ENCODE measurements at regions of chr13 and their contacts with region 1.

Region 1: GRCh38 chr13:24323036-24323738 is 13.8 kb downstream of the C1QTNF9 start:
- DNase-seq: no peak
- ATAC-seq: no peak
- H3K4me3 ChIP-seq: no peak overlapping the region
- H3K27ac ChIP-seq: no peak overlapping the region
- H3K4me1 ChIP-seq: peaks cover 0 to 5% (median 0%) of the 10 kb centered on the region in 9 donors
- H3K27me3 ChIP-seq: peaks cover 0 to 32% (median 9%) of the 10 kb centered on the region in 7 donors
- CTCF ChIP-seq: no peak

Region 2: DNA sequence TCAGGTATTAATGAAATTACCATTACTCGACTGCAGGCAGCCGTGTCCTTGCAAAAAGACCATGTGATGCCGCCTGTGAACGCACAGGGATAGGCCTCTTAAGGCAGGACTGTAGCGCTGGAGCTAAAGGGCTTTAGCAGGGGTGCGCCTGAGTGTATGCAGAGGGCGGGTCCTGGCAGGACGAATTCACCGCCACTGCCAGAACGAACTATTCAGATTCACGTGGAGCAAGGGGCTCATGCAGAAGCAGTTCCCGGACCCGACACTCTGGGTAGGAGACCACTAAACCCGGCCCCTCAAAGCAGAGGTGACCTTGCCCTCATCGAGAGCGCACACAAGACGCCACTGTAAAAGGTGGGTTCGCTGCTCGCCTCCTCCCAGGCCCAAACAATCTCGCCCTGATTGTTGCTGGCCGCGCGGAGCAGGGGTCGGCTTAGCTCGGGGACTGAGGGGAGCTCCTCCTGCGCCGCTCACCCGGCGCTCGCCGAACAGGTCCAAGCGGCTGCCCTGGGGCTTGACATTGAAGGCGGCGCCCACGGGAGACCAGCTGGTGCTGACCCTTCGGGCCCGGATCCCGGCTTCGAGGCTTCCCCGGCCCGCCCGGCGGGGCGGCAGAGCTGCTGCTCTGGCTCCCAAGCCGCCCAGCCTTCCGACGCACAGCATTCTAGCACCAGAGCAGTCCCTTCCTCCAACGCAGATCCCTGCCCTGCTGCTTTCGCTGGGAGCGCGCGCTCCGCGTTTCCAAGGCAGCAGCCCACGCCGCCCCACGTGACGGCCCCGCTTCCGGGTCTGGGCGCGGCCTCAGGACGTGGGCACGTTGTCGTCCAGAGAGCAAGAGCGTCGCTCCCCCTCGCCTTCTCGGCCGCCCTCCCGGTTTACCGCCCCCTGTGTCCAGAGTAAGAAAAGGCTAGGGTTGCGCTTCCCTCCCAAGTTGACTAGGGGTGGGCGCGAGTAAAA is 434.3 kb before region 1 on chr13 and contains the start of gene MIPEP:
- intact Hi-C with region 1: loop called in 2 of 10 experiments (anchors 5 kb)
- DNase-seq: peak; percentile 92 to 94
- ATAC-seq: peak; percentile 99
- H3K4me3 ChIP-seq: peak within 1 kb of the TSS; percentile 70 to 100 (median 89)
- H3K27ac ChIP-seq: peak within 1 kb of the TSS; percentile 59 to 94 (median 86)
- H3K4me1 ChIP-seq: peaks cover 0 to 28% (median 11%) of the 10 kb centered on the region in 9 donors
- H3K27me3 ChIP-seq: no peaks in the 10 kb centered on the region
- CTCF ChIP-seq: peak; percentile 45 to 96 (median 78)
- total RNA-seq, gene MIPEP: 28.7 to 83.4 (median 47.3) TPM

Region 3: DNA sequence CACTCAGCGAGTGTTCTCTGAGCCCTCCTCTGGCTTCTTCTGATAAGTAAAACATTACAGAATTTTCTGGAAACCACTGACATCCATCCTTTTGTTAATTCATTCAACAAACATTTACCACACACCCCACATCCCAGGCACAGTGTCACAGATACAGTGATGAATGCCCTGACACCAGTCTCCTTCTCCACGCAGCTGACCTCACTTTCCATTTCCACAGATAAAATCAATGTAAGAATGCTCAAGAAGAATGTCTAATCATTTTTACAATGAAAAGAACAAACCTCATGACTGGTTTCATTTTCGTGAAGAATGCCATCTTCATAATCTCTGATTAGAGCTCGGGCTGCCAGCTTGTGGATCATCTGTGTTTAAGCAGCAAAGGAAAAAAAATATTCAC is 120.2 kb after region 1 on chr13:
- intact Hi-C with region 1: no loop called
- DNase-seq: no peak
- ATAC-seq: no peak
- H3K4me3 ChIP-seq: no peak overlapping the region
- H3K27ac ChIP-seq: no peak overlapping the region
- H3K4me1 ChIP-seq: no peaks in the 10 kb centered on the region
- H3K27me3 ChIP-seq: no peaks in the 10 kb centered on the region
- CTCF ChIP-seq: no peak